ENCODE measurements at regions of chr18 and their contacts with region 1.

Region 1: DNA sequence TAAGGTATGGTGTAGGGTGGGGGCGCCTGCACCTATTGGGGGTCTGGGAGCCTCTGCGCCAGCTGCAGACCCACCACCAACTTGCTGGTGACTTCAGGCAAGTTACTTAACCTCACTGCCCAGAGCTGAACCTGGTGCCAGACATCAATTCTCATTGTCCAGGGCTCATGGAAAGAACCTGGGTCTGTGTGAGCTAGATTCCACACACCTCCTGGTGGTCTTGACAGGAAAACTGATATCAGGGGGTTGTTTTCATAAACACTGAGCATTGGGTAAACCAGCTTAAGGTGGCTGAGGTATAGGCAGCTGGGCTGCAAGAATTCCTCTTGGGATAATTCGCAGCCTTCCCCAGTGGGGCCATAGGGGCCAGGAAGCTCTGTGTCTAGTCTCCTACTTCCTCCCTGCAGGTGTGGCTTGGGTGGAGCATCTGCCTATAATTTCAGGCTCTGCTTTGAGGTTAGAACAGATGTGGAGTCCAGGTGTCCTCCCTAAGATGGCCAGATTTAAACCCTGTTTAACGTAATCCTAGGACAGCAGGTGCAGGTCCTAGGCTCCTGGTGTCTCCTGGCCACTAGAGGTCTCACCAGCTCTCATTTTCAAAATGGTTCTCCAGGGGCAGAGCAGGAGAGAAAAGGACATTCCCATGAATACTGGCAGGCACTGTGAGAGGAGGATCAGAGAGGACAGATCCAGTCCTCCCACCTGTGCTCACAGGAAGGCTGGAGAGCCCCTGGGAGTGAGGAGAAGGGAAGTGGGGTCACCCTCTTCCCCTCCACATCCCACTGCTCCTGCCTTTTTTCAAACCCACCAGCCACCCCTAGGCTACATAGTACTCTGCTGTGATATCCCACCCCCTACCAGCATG is 100.4 kb upstream of the SMAD2 start:
- DNase-seq: peak in 1 of 2 donors; percentile 85
- H3K4me3 ChIP-seq: no peak overlapping the region
- CTCF ChIP-seq: no peak
- POLR2A ChIP-seq: no peak

Region 2: GRCh38 chr18:48330403-48331022 is 299.7 kb after region 1 on chr18:
- intact Hi-C with region 1: loop called (anchors 10 kb)
- DNase-seq: no peak
- H3K4me3 ChIP-seq: no peak overlapping the region
- CTCF ChIP-seq: no peak
- POLR2A ChIP-seq: no peak

Region 3: DNA sequence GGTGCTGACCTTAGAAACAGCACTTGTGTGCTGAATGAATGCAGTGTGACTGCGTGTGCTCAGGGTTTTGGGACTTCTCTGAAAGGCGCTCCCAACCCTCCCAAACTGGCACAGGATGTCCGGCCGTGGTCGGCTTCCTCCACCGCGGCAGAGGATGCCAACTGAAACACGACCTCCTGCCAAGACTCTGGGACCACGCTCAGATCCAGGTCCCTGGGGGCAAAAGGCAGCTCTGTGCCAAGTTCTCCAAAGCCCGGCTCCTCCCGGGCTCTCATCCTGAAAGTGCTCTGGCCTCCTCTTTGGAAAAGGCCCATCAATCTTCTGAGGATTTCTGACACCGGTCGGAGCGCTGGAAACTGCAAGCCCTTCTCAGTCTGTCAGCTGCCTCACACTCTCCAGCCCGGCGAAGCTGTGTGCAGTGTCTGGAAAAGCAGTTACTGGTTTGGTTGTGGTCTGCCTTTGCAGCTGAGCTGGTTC is 410.6 kb after region 1 on chr18:
- intact Hi-C with region 1: loop called (anchors 5 kb)
- DNase-seq: peak in 1 of 2 donors; percentile 90
- H3K4me3 ChIP-seq: no peak overlapping the region
- CTCF ChIP-seq: no peak
- POLR2A ChIP-seq: no peak

Measured in lower leg skin (tissue), 4 donors.